Cardiac septum (tissue), 1 donor: ENCODE measurements at regions of chr11 and their contacts with region 1.

Region 1: DNA sequence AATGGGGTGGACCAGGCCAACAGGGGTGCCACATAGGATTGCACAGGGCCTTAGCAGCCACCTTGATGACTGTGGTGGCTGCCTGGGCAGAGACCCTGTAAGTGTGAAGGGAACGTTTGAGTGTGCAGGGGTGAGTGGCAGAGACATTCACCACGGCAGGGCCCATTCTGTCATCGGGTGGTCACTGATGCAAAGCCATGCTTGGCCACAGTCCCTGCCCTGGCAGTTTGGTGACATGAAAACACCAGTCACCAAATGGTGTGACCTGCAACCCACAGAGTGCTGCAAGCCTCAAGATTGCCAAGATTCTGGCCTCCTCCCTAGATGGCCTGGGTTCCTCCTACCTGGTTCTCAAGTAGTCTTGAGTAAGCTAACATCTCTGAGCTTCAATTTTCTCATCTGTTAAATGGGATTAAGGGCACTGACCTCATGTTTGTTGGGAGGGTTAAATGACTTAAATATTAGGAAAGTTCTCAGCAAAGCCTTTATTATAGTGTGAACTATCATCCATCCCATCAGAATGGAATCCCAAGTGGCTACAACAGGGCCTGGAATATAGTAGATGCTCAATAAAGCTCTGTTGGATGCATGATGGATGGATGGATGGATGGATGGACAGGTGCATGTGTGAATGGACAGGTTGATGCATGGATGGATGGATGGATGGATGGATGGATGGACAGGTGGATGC is 53.0 kb downstream of the MACROD1 start:
- DNase-seq: no peak

Region 2: GRCh38 chr11:64131683-64132190 is 18.8 kb after region 1 on chr11:
- intact Hi-C with region 1: loop called (anchors 2 kb)
- DNase-seq: no peak

Region 3: GRCh38 chr11:64165849-64166635 is 53.1 kb after region 1 on chr11 and contains the start of gene MACROD1:
- intact Hi-C with region 1: no loop called
- DNase-seq: peak; percentile 91
- total RNA-seq, gene MACROD1: 86.2 TPM